Gastrocnemius medialis (tissue), 4 donors: ENCODE measurements at regions of chr2 and their contacts with region 1.

Region 1: GRCh38 chr2:177263451-177264208 is 897 bp downstream of the NFE2L2 start:
- DNase-seq: peak; percentile 98 to 99
- ATAC-seq: peak; percentile 71
- H3K4me3 ChIP-seq: peak overlapping the region; percentile 86 to 99 (median 96)
- H3K27ac ChIP-seq: peak overlapping the region; percentile 99 to 100 (median 100)
- H3K4me1 ChIP-seq: peaks cover 54% of the 10 kb centered on the region in 2 donors
- H3K27me3 ChIP-seq: no peaks in the 10 kb centered on the region
- CTCF ChIP-seq: peak; percentile 86 to 98 (median 92)
- POLR2A ChIP-seq: peak; percentile 69 to 85

Region 2: GRCh38 chr2:177242116-177242987 is 21.3 kb before region 1 on chr2:
- in situ Hi-C with region 1: no loop called
- intact Hi-C with region 1: loop called (anchors 1 kb)
- DNase-seq: no peak
- ATAC-seq: peak; percentile 84 to 86
- H3K4me3 ChIP-seq: peak overlapping the region; percentile 38 to 52 (median 44)
- H3K27ac ChIP-seq: peak overlapping the region; percentile 82 to 91 (median 85)
- H3K4me1 ChIP-seq: peaks cover 92 to 96% of the 10 kb centered on the region in 2 donors
- H3K27me3 ChIP-seq: no peaks in the 10 kb centered on the region
- CTCF ChIP-seq: no peak
- POLR2A ChIP-seq: no peak

Region 3: DNA sequence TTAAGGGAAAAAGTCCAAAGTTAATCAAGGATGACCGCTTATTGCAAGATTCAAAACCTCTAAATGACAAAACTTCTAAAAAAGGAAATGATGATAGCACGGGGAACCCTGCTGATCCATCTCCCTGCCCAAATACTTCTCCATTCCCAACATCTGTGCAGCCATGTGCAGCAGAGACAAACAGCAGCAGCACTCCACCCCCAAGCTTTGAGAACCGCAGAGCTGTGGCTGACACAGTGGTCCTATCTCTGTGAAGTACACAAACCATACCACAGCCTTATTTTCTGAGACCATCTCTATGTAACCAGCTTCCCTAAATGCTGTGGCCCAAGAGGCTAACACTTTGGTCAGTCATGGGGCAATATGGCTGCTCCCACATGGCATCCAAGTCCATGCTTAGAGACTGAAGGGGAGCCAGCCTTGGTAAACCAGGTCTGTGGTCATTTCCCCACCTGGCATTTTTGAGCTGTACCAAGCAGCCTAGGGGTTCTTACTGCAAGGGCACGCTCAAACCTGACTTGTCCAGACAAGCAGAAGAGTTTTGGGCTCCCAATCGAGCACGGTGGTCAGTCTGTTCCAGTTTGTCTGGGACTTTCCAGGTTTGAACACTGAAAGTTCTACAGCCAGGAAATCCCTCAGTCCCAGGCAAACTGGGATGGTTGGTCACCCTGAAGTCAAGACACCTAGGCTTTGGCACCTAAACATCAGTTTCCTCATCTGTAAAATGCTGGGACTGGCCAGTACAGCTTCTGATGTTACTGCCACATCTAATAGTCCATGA is 18.0 kb after region 1 on chr2:
- in situ Hi-C with region 1: no loop called
- intact Hi-C with region 1: loop called (anchors 1 kb)
- DNase-seq: peak; percentile 36 to 51
- ATAC-seq: peak in 1 of 2 donors; percentile 88
- H3K4me3 ChIP-seq: no peak overlapping the region
- H3K27ac ChIP-seq: peak overlapping the region; percentile 63 to 86 (median 68)
- H3K4me1 ChIP-seq: peaks cover 19 to 53% of the 10 kb centered on the region in 2 donors
- H3K27me3 ChIP-seq: no peaks in the 10 kb centered on the region
- CTCF ChIP-seq: no peak
- POLR2A ChIP-seq: no peak

Region 4: DNA sequence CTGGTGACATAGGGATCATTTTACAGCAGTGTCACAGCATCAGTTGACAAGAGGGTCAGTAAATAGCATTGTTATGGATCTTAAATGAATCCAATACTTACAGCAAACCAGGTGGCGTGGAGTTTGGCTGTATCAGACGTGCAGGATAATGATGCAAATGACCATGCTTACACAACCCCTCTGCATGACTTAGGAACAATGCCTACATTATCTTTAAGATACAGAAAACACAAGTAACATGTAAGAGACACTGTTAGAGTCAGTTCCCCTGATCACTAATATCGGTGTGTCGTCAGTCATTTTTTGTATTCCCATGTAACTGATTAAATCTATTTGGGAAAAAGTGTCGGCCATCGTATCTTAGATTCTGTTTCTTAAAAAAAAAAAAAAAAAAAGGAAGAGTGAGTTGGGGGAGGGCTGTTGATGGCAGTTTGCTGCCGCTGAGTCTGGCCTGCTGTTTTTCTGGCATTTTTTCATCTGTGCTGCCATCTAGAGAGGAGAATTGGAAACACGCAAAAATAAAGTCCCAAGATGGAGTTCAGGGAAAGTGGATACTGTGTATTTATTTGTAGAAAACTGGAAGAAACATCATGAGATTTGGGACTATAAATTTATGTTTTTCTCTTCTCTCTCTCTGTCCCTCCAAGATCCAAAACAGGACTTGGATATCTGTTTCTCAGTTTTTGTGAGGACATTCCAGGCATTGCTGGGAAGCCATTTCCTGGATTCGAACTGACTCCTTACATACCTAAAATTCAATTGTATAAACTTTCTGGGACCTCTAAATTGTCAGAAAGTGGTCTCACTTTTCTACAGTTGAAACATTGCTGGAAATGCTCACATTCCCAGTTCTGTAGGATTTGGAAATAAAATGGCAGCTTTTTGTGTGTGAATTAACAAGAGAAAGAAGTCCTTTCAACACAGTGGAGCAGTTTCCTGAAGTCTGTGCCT is 68.7 kb after region 1 on chr2:
- in situ Hi-C with region 1: loop called in 1 of 4 experiments (anchors 5 kb)
- intact Hi-C with region 1: loop called (anchors 1 kb)
- DNase-seq: peak; percentile 23 to 33
- ATAC-seq: peak; percentile 83 to 91
- H3K4me3 ChIP-seq: no peak overlapping the region
- H3K27ac ChIP-seq: no peak overlapping the region
- H3K4me1 ChIP-seq: peaks cover 0 to 5% of the 10 kb centered on the region in 2 donors
- H3K27me3 ChIP-seq: no peaks in the 10 kb centered on the region
- CTCF ChIP-seq: peak; percentile 51 to 75 (median 64)
- POLR2A ChIP-seq: no peak

Region 5: GRCh38 chr2:177419274-177419673 is 155.6 kb after region 1 on chr2:
- in situ Hi-C with region 1: no loop called
- intact Hi-C with region 1: loop called (anchors 5 kb)
- DNase-seq: no peak
- ATAC-seq: no peak
- H3K4me3 ChIP-seq: no peak overlapping the region
- H3K27ac ChIP-seq: no peak overlapping the region
- H3K4me1 ChIP-seq: peaks cover 9% of the 10 kb centered on the region in 2 donors
- H3K27me3 ChIP-seq: no peaks in the 10 kb centered on the region
- CTCF ChIP-seq: no peak
- POLR2A ChIP-seq: no peak